Thyroid gland (tissue), 4 donors: ENCODE measurements at regions of chr19 and their contacts with region 1.

Region 1: GRCh38 chr19:14556662-14557188 is 15.1 kb downstream of the NDUFB7 start:
- DNase-seq: peak; percentile 65 to 76
- H3K4me3 ChIP-seq: no peak overlapping the region
- H3K27ac ChIP-seq: peak overlapping the region in 1 of 3 donors; percentile 86
- H3K4me1 ChIP-seq: peaks cover 27 to 46% of the 10 kb centered on the region in 2 donors
- H3K27me3 ChIP-seq: no peaks in the 10 kb centered on the region
- CTCF ChIP-seq: peak; percentile 76 to 97 (median 89)
- POLR2A ChIP-seq: no peak

Region 2: DNA sequence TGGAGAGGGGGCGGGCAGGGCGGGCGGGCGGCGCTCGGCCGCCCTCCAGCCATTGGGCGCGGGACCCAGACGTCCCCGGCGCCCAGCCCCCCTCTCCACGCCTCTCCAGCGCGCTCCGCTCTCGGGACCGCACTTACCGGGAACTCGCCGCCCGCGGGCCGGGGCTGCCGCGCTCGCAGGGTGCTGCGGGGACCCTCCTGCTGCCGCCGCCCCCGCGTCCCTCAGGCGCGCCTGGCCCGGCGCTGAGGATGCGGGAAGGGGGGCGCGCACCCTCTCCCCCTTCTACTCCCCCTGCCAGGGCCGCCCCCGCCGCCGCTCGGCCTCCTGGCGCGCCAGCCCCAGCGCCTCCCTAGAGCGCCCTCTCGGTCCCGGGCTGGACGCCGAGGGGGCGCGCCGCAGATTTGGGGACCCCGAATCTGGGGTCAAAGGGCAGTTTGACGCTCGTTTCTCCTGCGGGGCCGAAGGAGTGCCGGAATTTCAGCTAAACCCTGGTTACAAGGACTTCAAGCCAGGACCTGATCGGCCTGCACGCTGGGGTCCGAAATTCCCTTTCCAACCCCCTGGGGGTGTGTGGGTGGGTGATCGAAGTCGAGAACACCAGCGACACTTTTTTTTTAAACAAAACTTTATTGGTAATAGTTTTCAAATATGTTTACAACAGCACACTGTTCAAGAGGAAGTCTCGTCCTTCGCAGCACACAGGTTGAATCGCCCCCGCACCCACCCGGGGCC is 465.5 kb before region 1 on chr19:
- intact Hi-C with region 1: no loop called
- DNase-seq: peak; percentile 26 to 51
- H3K4me3 ChIP-seq: peak overlapping the region; percentile 45 to 93 (median 65)
- H3K27ac ChIP-seq: peak overlapping the region; percentile 48 to 97 (median 90)
- H3K4me1 ChIP-seq: peaks cover 0 to 27% of the 10 kb centered on the region in 2 donors
- H3K27me3 ChIP-seq: no peaks in the 10 kb centered on the region
- CTCF ChIP-seq: peak in 2 of 6 experiments; percentile 8 to 19
- POLR2A ChIP-seq: peak; percentile 59 to 81

Region 3: DNA sequence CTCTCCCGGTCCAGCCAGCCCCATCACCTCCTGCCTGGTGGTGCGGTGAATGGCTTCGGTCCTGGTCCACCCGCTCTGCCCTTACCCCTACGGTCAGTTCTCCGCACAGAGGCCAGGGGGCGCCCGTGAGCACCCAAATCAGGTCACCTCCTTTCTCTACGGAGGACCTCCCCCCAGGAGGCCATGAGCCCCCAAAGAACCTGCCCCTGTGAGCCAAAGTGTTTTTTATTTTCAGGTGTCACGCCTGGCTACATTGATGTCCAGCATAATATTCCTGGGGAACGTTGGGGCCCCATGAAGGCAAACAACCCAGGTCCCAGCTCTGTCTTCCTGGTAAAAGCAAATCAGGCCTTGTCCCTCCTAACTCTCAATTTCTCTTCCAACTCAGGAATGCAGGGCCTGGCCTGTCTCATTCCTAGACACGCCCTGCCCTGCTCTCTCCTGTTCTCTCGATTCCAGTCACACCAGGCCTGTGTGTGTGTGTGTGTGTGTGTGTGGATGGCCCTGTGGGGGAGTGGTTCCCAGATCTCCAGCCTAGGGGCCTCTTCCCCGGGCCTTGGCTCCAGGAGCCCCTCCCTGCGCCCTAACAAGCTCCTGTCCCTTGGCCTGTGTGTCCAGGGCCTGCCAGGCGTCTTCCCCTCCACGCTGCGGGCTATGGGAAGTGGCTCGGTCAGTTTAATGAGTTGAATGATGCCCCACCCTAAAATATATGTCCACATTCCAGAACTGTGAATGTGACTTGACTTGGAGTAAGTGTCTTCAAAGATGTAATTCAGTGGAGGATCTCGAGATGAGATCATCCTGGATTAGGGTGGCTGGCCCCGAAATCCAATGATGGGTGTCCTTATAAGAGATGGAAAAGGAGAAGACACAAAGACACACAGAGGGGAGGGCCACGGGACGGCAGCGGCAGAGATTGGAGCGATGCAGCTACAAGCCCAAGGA is 51.0 kb before region 1 on chr19:
- intact Hi-C with region 1: loop called (anchors 10 kb)
- DNase-seq: peak; percentile 43 to 61
- H3K4me3 ChIP-seq: no peak overlapping the region
- H3K27ac ChIP-seq: no peak overlapping the region
- H3K4me1 ChIP-seq: no peaks in the 10 kb centered on the region
- H3K27me3 ChIP-seq: no peaks in the 10 kb centered on the region
- CTCF ChIP-seq: peak; percentile 43 to 65 (median 52)
- POLR2A ChIP-seq: no peak

Region 4: GRCh38 chr19:14906711-14907110 is 350.0 kb after region 1 on chr19:
- intact Hi-C with region 1: no loop called
- DNase-seq: no peak
- H3K4me3 ChIP-seq: no peak overlapping the region
- H3K27ac ChIP-seq: no peak overlapping the region
- H3K4me1 ChIP-seq: no peaks in the 10 kb centered on the region
- H3K27me3 ChIP-seq: no peaks in the 10 kb centered on the region
- CTCF ChIP-seq: no peak
- POLR2A ChIP-seq: no peak